ENCODE measurements at regions of chr10 and their contacts with region 1.

Region 1: DNA sequence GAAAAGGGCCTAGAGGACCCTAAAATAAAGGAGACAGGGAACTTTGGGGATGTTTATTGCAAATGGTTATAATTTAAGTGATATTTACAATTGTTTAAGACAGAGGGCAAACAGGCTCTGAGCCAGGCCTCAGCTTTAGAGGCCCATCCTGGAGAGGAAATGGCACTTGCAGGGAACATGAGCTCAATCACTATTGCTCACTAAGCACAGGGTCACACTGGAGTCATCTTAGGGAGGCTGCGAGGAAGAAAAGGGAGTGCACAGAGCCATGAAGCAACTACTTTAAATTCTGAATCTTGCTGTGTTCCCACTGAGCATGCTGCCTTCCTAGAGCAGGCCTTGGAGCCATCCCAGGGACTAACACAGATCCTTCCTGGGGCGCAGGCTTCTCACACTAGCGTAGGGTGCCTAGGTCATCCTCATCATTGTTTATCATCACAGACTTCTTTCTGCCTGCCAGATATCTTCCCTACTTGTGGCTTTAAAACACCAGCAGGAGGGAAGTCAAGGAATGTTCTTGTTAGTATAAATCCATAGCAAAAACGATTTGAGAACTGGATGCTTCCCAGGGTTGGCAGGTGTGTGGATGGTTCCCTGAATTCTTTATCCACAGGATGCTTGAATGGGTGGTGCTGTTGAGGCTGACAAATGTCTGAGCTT is 12.7 kb upstream of the DNAJB12 start:
- DNase-seq: no peak
- ATAC-seq: no peak
- H3K4me3 Mint-ChIP-seq: no peak overlapping the region
- H3K27ac Mint-ChIP-seq: peak overlapping the region in 6 of 10 donors; percentile 28 to 53 (median 40)
- H3K4me1 Mint-ChIP-seq: peaks cover 12 to 33% (median 27%) of the 10 kb centered on the region in 4 donors
- H3K27me3 Mint-ChIP-seq: no peaks in the 10 kb centered on the region

Region 2: DNA sequence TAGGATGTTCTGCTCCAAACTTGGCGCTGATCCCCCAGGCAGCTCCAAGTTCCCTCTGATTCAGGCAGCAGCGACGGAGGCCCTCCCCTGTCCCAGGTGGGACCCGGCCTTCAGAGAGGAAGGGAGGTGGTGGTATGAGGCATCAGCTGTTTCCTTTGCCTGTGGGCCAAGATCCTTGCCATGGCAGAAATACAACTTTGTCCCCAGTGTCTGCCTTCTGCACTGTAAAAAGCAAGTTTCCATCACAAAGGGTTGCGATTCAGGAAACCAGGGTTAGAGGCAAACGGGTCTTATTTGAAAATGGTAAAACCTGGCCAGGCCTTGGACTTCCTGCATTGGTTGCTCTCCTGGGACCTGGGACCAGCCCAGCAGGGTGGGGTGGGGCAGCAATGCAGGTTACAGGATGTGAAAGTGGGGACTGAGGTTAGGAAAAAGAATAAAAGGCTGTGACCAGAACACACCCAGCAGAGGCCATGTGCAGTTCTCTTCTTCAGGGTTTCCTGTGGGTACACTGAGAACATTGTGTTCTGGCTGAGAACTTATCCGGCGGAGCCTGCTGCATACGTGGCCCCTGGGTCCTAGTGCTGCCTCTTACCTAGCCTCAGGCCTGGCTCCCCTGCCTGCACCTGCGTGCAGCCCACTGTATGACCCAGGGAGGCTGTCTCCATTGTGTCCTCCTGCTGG is 118.8 kb before region 1 on chr10:
- POLR2A ChIA-PET with region 1: no interaction called
- DNase-seq: peak; percentile 46 to 92 (median 81)
- ATAC-seq: peak; percentile 82 to 86
- H3K4me3 Mint-ChIP-seq: peak overlapping the region; percentile 70 to 91 (median 86)
- H3K27ac Mint-ChIP-seq: peak overlapping the region; percentile 93 to 99 (median 98)
- H3K4me1 Mint-ChIP-seq: peaks cover 49 to 95% (median 90%) of the 10 kb centered on the region in 4 donors
- H3K27me3 Mint-ChIP-seq: no peaks in the 10 kb centered on the region

Region 3: DNA sequence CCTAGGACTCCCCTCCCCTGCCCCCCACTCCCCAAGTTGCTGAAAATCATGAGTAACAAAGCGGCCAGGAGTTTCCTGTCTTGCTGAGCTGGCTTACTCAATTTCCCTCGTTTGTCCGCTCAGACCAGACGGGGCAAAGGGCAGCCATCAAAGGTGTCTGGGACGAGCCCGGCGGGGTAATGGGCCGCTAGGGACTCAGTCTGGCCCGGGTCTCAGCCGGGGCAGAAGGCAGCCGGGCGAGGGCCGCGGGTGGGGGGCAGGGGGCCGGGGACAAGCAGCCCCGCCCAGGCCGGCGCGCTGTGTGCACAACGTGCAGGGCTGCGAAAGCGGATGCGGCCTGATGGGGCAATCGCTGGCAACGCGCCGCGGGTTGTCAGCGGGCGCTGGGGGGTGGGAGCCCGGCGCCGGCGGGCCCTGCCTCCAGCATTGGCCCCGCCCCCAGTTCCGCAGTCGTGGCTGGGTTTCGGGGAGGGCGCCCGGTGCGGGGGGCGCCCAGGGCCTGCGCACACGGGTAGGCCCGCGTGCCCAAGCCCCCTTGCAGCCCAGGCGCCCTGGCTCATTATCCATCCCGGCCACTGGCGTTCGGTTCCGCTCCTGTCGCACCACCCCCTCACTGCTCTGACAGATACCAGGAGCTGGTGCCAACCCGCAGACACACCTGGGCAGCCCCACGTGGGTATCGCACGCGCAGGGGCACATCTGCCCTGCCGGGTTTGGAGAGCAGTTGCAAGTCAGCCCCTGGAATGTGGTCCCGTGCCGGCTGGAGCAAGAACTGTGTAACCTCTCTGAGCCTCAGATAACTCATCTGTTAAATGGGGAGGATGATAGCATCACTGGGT is 47.8 kb before region 1 on chr10:
- POLR2A ChIA-PET with region 1: no interaction called
- DNase-seq: peak; percentile 78 to 93 (median 88)
- ATAC-seq: peak; percentile 71 to 82
- H3K4me3 Mint-ChIP-seq: peak overlapping the region; percentile 67 to 85 (median 82)
- H3K27ac Mint-ChIP-seq: peak overlapping the region; percentile 90 to 99 (median 98)
- H3K4me1 Mint-ChIP-seq: peaks cover 46 to 90% (median 88%) of the 10 kb centered on the region in 4 donors
- H3K27me3 Mint-ChIP-seq: no peaks in the 10 kb centered on the region

Region 4: GRCh38 chr10:72834183-72834825 is 466.9 kb after region 1 on chr10:
- POLR2A ChIA-PET with region 1: interaction called, 11 read pairs
- DNase-seq: peak in 8 of 10 donors; percentile 4 to 57 (median 32)
- ATAC-seq: peak; percentile 52 to 63
- H3K4me3 Mint-ChIP-seq: no peak overlapping the region
- H3K27ac Mint-ChIP-seq: no peak overlapping the region
- H3K4me1 Mint-ChIP-seq: peaks cover 0 to 4% (median 0%) of the 10 kb centered on the region in 4 donors
- H3K27me3 Mint-ChIP-seq: no peaks in the 10 kb centered on the region

Measured in naive thymus-derived CD8-positive, alpha-beta T cell (primary cell).